Prostate gland (tissue), 2 donors: ENCODE measurements at regions of chr2 and their contacts with region 1.

Region 1: GRCh38 chr2:137467246-137467862 is 496.9 kb upstream of the HNMT start:
- DNase-seq: peak; percentile 9
- H3K4me3 ChIP-seq: no peak overlapping the region
- H3K27ac ChIP-seq: no peak overlapping the region
- H3K4me1 ChIP-seq: no peaks in the 10 kb centered on the region
- H3K27me3 ChIP-seq: no peaks in the 10 kb centered on the region
- CTCF ChIP-seq: peak in 3 of 4 experiments; percentile 26 to 49 (median 46)
- POLR2A ChIP-seq: no peak

Region 2: GRCh38 chr2:136051001-136051724 is 1416.2 kb before region 1 on chr2:
- intact Hi-C with region 1: no loop called
- DNase-seq: no peak
- H3K4me3 ChIP-seq: no peak overlapping the region
- H3K27ac ChIP-seq: no peak overlapping the region
- H3K4me1 ChIP-seq: no peaks in the 10 kb centered on the region
- H3K27me3 ChIP-seq: no peaks in the 10 kb centered on the region
- CTCF ChIP-seq: no peak
- POLR2A ChIP-seq: no peak

Region 3: DNA sequence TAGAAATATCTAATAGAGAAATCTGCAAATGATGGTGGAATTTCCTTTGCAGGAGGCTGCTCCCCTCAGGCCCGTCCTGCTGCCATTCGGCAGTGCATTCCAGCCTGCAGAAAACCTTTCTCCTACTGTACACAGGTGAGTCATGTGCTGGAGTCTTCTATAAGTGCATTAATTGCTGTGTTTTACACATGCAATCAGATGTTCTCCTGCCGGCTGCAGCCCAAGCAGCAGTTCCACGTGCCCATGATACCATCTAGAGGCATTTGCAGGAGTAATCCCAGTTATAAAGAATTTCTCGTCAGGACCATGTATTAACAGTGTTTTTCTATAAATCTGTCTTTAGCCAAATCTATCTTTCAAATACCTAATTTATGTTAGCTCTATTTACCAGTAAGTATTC is 192.3 kb after region 1 on chr2:
- intact Hi-C with region 1: loop called (anchors 10 kb)
- DNase-seq: no peak
- H3K4me3 ChIP-seq: no peak overlapping the region
- H3K27ac ChIP-seq: no peak overlapping the region
- H3K4me1 ChIP-seq: no peaks in the 10 kb centered on the region
- H3K27me3 ChIP-seq: no peaks in the 10 kb centered on the region
- CTCF ChIP-seq: no peak
- POLR2A ChIP-seq: no peak

Region 4: GRCh38 chr2:137838255-137839092 is 371.1 kb after region 1 on chr2:
- intact Hi-C with region 1: loop called (anchors 10 kb)
- DNase-seq: no peak
- H3K4me3 ChIP-seq: no peak overlapping the region
- H3K27ac ChIP-seq: no peak overlapping the region
- H3K4me1 ChIP-seq: no peaks in the 10 kb centered on the region
- H3K27me3 ChIP-seq: no peaks in the 10 kb centered on the region
- CTCF ChIP-seq: peak; percentile 33 to 79 (median 70)
- POLR2A ChIP-seq: no peak